ENCODE measurements at regions of chrX and their contacts with region 1.

Region 1: GRCh38 chrX:104318330-104319009 is 63.7 kb upstream of the ESX1 start:
- DNase-seq: peak; percentile 53 to 98
- H3K4me3 ChIP-seq: peak overlapping the region; percentile 45
- H3K27ac ChIP-seq: peak overlapping the region; percentile 99
- H3K4me1 ChIP-seq: peaks cover 81% of the 10 kb centered on the region
- H3K27me3 ChIP-seq: no peaks in the 10 kb centered on the region
- CTCF ChIP-seq: no peak; the same call in 1 of the 2 replicates

Region 2: DNA sequence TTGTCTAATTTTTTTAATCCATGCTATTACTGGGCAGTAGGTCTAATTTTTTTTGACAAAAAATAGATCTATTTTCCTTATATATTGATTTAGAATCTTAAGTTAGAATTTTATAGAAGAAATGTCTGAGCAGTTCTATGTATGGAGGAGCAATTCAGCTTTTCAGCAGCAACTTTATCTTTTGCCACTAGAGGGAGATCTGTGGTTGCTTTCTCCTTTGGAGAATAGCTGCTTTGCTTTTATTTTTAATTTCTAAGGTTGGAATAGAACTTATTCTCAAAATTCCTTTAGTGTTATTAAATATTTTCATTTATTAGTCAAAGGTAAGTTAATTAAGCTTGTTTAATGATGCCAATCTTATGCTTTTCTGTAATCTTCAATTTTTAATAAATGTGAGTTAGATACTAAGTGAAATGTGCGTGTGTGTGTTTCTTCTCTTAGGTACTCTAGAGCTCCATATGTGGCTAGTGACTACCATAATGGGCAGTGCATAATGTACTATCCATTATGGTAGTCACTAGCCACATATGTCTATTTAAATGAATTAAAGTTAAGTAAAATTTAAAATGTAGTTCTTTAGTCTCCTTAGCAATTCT is 122.9 kb before region 1 on chrX:
- CTCF ChIA-PET with region 1: no interaction called
- POLR2A ChIA-PET with region 1: no interaction called
- intact Hi-C with region 1: no loop called
- DNase-seq: peak in 1 of 2 experiments; percentile 39
- H3K4me3 ChIP-seq: no peak overlapping the region
- H3K27ac ChIP-seq: no peak overlapping the region
- H3K4me1 ChIP-seq: no peaks in the 10 kb centered on the region
- H3K27me3 ChIP-seq: no peaks in the 10 kb centered on the region
- CTCF ChIP-seq: peak; percentile 80

Region 3: GRCh38 chrX:104335758-104336157 is 17.3 kb after region 1 on chrX:
- CTCF ChIA-PET with region 1: interaction called, 4 read pairs
- POLR2A ChIA-PET with region 1: no interaction called
- intact Hi-C with region 1: loop called (anchors 2 kb)
- DNase-seq: peak; percentile 21 to 92
- H3K4me3 ChIP-seq: no peak overlapping the region
- H3K27ac ChIP-seq: peak overlapping the region; percentile 90
- H3K4me1 ChIP-seq: peaks cover 66% of the 10 kb centered on the region
- H3K27me3 ChIP-seq: no peaks in the 10 kb centered on the region
- CTCF ChIP-seq: no peak

Measured in PC-9 (cell line).